Prostate gland (tissue), 2 donors: ENCODE measurements at regions of chr11 and their contacts with region 1.

Region 1: DNA sequence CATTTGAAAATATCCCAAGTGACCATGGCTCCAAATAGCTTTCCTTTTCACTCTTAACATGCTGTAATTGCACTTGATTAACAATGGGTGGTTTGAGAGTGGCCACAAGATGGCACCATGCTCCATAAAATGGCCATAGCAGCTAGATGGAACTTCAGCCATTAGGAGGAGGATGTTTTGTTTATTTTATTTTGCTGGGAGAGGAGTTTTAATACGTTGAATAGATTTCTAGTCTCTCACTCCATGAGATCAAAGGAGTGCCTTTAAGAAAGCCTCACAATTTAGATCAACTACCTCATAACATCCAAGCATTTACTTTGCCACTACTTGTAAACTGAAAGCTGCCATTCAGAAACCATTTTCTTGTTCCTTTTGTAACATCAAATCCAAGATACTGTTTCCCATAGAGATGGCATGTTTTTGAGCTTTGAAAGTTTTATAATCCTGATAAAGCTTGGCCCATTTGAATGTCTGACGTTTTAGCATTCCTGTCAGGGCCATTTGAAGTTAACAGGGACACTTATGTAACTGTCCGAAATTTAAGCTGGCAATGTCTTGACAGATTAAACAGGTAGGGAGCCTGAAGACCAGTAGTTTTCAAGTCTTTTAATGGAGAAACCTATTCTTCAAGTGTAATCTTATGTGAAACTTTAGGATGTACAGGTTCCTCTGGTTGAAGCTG is 4.7 kb downstream of the FEN1 start:
- DNase-seq: peak; percentile 86
- H3K4me3 ChIP-seq: no peak overlapping the region
- H3K27ac ChIP-seq: peak overlapping the region; percentile 60 to 69
- H3K4me1 ChIP-seq: peaks cover 8% of the 10 kb centered on the region
- H3K27me3 ChIP-seq: no peaks in the 10 kb centered on the region
- CTCF ChIP-seq: peak; percentile 35 to 95 (median 92)
- POLR2A ChIP-seq: no peak

Region 2: DNA sequence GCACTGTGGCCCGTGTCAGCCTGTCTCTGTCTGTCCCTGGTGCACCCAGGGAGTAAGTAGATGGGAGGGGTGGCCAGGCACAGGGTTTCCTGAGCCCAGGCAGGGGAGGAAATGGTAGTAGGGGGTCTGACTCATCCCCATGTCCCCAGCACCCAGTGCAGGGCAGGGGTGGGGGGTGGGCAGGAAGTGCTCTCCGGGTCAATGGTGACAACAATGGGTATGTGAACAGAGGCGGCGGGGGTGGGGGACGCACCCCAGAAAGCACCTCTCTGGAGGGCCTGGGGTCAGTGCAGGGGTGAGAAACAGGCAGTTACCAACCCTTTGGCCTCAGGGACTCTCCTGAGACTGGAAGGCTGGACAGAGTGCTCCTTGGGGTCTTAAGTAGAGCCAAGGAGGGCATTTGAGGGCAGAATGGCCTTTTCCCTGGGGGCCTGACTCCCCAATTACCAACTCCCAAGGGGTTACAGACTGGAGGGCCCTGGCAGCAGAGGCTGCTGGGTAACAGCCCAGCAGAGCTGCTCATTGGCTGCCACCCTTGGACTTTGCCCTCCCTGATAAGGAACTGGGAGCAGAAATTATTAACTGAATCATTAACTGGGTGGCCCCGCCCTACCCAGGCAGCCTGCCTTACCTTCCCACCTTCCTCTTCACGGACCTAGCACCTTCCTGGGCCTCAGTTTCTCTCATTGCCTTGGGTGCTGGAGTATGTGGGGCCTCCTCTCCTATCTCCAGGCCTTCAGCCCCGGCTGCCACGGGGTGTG is 40.8 kb before region 1 on chr11:
- intact Hi-C with region 1: no loop called
- DNase-seq: no peak
- H3K4me3 ChIP-seq: no peak overlapping the region
- H3K27ac ChIP-seq: no peak overlapping the region
- H3K4me1 ChIP-seq: no peaks in the 10 kb centered on the region
- H3K27me3 ChIP-seq: no peaks in the 10 kb centered on the region
- CTCF ChIP-seq: no peak
- POLR2A ChIP-seq: no peak

Region 3: DNA sequence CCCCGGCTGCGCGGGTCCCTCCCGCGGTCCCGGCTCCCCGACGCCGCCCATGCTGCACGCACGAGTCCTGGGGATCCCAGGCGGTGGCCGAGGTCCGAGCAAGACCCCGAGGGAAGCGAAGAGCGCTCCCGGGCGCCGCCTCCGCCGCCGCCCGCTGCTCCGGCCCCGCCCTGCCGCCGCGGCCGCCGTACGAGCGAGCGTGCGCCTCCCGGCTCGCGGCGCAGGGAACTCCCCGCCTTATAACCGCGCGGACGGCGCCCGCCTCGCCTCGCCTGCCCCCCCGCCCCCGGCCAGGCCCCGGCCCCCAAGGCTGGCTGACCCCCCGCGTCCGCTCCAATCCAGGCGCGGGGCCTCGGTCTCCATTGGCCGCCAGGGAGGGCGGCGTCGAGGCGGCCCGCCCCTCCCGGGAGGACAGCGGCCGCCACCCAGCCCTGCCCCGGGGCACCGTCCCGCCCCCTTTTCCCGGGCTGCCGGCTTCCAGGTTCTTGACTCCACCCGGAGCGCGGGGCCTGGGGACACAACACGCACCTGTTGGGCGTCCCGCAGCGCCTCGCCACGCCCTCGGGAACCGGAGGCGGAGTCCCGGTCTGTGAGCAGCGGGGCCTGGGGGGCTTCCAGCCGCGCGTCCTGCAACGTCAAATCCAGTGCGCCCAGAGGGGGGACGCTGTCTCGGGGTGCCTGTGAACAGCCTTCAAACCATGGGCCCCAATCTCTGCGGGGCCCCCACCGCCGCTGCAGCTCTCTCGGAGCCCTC is 94.1 kb after region 1 on chr11 and contains the start of gene FADS3:
- intact Hi-C with region 1: loop called (anchors 2 kb)
- DNase-seq: peak; percentile 71
- H3K4me3 ChIP-seq: peak within 1 kb of the TSS; percentile 73 to 85
- H3K27ac ChIP-seq: peak within 1 kb of the TSS; percentile 70 to 72
- H3K4me1 ChIP-seq: peaks cover 9% of the 10 kb centered on the region
- H3K27me3 ChIP-seq: no peaks in the 10 kb centered on the region
- CTCF ChIP-seq: peak in 2 of 4 experiments; percentile 3 to 4
- POLR2A ChIP-seq: peak; percentile 14
- total RNA-seq, gene FADS3: 18.5 to 74.9 TPM

Region 4: DNA sequence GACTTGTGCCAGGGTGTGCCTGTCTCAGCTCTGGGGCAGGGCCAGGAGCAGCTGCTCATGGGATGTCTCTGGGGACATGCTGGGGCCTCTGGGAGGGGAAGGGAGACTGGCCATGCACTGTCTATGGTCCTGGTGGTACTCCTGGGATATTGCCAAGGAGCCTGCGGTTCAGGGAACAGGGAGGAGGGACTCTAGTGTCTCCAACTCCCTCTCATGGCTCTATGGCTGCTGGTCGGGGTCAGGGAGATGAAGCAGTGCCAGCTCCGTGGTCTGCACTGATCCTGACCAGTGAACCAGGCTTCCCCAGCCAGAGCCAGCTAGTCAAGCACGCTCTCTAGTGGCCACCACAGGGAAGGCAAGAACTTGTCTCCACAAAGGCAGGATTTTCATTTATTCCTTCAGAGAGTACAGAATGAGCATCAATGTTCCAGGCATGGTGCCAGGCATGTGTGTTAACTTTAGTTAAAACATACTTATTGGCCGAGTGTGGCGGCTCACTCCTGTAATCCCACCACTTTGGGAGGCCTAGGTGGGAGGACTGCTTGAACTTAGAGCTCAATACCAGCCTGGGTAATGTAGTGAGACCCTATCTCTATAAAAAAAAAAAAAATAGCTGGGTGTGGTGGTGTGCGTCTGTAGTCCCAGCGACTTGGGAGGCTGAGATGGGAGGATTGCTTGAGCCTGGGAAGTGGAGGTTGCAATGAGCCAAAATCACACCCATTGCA is 150.2 kb after region 1 on chr11:
- intact Hi-C with region 1: loop called (anchors 2 kb)
- DNase-seq: peak; percentile 82
- H3K4me3 ChIP-seq: no peak overlapping the region
- H3K27ac ChIP-seq: no peak overlapping the region
- H3K4me1 ChIP-seq: no peaks in the 10 kb centered on the region
- H3K27me3 ChIP-seq: no peaks in the 10 kb centered on the region
- CTCF ChIP-seq: peak; percentile 69 to 91 (median 83)
- POLR2A ChIP-seq: no peak

Region 5: GRCh38 chr11:62108017-62108750 is 310.8 kb after region 1 on chr11:
- intact Hi-C with region 1: loop called (anchors 5 kb)
- DNase-seq: peak; percentile 49
- H3K4me3 ChIP-seq: no peak overlapping the region
- H3K27ac ChIP-seq: no peak overlapping the region
- H3K4me1 ChIP-seq: no peaks in the 10 kb centered on the region
- H3K27me3 ChIP-seq: no peaks in the 10 kb centered on the region
- CTCF ChIP-seq: peak; percentile 77 to 86 (median 82)
- POLR2A ChIP-seq: no peak